Dorsolateral prefrontal cortex (tissue), 120 donors: ENCODE measurements at regions of chr14 and their contacts with region 1.

Region 1: GRCh38 chr14:65164068-65164824 is 61.9 kb upstream of the MAX start:
- DNase-seq: peak in 1 of 10 donors; percentile 24
- H3K4me3 ChIP-seq: no peak overlapping the region
- H3K27ac ChIP-seq: peak overlapping the region in 6 of 59 donors; percentile 1 to 47 (median 42)
- H3K27me3 ChIP-seq: no peaks in the 10 kb centered on the region
- CTCF ChIP-seq: peak; percentile 56 to 95 (median 78)

Region 2: GRCh38 chr14:65373679-65374039 is 209.4 kb after region 1 on chr14:
- intact Hi-C with region 1: loop called (anchors 2 to 10 kb)
- DNase-seq: peak in 9 of 10 donors; percentile 41 to 80 (median 65)
- H3K4me3 ChIP-seq: peak overlapping the region in 48 of 59 donors; percentile 4 to 66 (median 38)
- H3K27ac ChIP-seq: peak overlapping the region in 57 of 59 donors; percentile 58 to 97 (median 86)
- H3K27me3 ChIP-seq: peaks cover 0 to 5% (median 0%) of the 10 kb centered on the region in 45 donors
- CTCF ChIP-seq: peak in 50 of 56 donors; percentile 24 to 75 (median 48)

Region 3: DNA sequence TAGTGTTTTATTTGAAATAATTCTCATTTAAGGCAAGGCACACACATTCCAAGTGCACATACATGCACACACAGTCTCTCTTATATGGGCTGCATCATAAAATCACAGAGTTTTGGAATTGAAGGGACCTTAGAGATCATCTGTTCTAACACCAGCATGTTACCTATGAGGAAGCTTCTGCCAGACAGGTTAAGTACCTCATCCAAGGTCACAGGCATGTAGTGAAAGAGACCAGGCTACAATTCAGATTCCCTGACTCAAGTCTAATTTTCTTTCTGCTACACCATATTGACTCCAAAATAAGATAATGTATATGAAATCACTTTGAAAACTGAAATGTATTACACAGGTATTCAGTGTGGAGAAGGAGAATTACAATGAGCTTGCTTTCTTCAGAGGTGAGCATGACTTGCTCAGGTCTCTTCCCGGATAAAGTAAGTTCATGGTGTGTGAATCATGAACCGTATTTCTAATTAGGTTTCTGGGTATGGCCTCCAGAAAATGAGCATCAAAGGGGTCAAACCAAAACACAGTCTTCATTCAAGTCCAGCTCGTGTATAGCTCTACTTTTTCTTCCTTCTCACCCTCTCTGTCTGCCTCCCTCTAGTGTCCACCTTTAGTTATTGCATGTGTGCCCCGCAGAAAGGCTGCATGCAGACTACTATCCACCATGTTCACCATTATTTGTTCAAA is 660.2 kb after region 1 on chr14:
- intact Hi-C with region 1: loop called (anchors 2 to 5 kb)
- DNase-seq: peak in 7 of 10 donors; percentile 29 to 57 (median 46)
- H3K4me3 ChIP-seq: no peak overlapping the region
- H3K27ac ChIP-seq: no peak overlapping the region
- H3K27me3 ChIP-seq: no peaks in the 10 kb centered on the region
- CTCF ChIP-seq: peak; percentile 76 to 97 (median 91)

Region 4: GRCh38 chr14:65958664-65959562 is 794.7 kb after region 1 on chr14:
- intact Hi-C with region 1: loop called (anchors 2 to 5 kb)
- DNase-seq: peak in 1 of 10 donors; percentile 46
- H3K4me3 ChIP-seq: no peak overlapping the region
- H3K27ac ChIP-seq: no peak overlapping the region
- H3K27me3 ChIP-seq: no peaks in the 10 kb centered on the region
- CTCF ChIP-seq: peak; percentile 45 to 79 (median 66)

Region 5: GRCh38 chr14:66070509-66071319 is 906.5 kb after region 1 on chr14:
- intact Hi-C with region 1: loop called (anchors 10 kb)
- DNase-seq: peak in 4 of 10 donors; percentile 17 to 66 (median 50)
- H3K4me3 ChIP-seq: peak overlapping the region in 14 of 59 donors; percentile 1 to 40 (median 17)
- H3K27ac ChIP-seq: peak overlapping the region in 1 of 59 donors; percentile 17
- H3K27me3 ChIP-seq: no peaks in the 10 kb centered on the region
- CTCF ChIP-seq: peak in 55 of 56 donors; percentile 46 to 85 (median 75)